HepG2 (cell line): ENCODE measurements at regions of chr17 and their contacts with region 1.

Region 1: GRCh38 chr17:17370711-17371110 is 67.5 kb downstream of the NT5M start:
- DNase-seq: no peak
- ATAC-seq: peak; percentile 25; the same call in 2 of the 3 replicates
- H3K4me3 ChIP-seq: no peak overlapping the region
- H3K27ac ChIP-seq: no peak overlapping the region
- H3K4me1 ChIP-seq: peaks cover 48% of the 10 kb centered on the region
- H3K27me3 ChIP-seq: no peaks in the 10 kb centered on the region
- CTCF ChIP-seq: no peak
- EP300 ChIP-seq: no peak
- POLR2A ChIP-seq: no peak
- RAD21 ChIP-seq: no peak

Region 2: DNA sequence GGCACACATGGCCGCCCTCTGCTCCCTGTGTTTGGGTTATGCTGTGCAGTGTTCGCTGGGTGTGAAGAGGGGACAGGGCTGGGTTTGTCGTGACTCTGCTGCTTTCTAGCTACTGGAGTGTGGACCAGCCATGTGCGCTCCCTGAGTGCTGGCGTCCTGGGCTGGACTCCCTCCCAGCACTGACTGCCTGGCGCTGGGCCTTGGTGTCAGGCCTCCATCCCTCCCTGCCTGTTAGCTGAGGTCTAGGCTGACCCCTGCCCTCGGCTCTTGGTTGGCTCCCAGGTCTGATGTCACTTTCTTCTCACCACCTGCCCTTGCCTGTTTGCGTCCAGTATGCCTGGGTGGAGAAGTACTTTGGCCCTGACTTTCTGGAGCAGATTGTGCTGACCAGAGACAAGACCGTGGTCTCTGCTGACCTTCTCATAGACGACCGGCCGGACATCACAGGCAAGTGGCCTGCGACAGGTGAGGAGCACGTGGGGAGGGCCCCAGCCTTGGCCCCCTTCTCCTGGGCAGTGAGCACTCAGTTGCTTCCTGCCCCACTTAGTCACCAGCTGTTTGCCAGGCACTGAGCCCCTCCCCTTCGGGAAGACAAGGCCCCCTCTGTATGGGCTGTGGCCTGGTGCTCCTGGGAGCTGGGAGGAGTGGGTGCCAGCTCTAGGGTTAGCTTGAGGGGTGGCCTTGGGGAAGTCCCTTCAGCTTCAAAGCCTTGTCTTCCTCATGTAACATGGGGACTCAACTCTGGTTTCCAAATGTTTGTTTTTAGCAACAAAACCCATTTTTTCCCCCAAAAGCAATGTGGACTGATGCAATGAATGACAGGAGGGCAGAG is 26.0 kb before region 1 on chr17:
- CTCF ChIA-PET with region 1: no interaction called
- POLR2A ChIA-PET with region 1: no interaction called
- in situ Hi-C with region 1: no loop called
- intact Hi-C with region 1: no loop called
- DNase-seq: peak; percentile 68
- ATAC-seq: peak; percentile 44
- H3K4me3 ChIP-seq: peak overlapping the region in 1 of 3 experiments; percentile 7; a peak in 1 of 6 replicates
- H3K27ac ChIP-seq: no peak overlapping the region
- H3K4me1 ChIP-seq: peaks cover 69% of the 10 kb centered on the region
- H3K27me3 ChIP-seq: peaks cover 2 to 22% of the 10 kb centered on the region in 2 experiments
- CTCF ChIP-seq: no peak
- EP300 ChIP-seq: no peak; a peak in 1 of 4 replicates
- POLR2A ChIP-seq: no peak
- RAD21 ChIP-seq: no peak

Region 3: GRCh38 chr17:17387830-17388441 is 17.2 kb after region 1 on chr17:
- CTCF ChIA-PET with region 1: no interaction called
- POLR2A ChIA-PET with region 1: interaction called, 14 read pairs
- in situ Hi-C with region 1: no loop called
- intact Hi-C with region 1: no loop called
- DNase-seq: peak; percentile 77
- ATAC-seq: peak; percentile 95
- H3K4me3 ChIP-seq: peak overlapping the region in 2 of 3 experiments; percentile 25 to 62; a peak in 3 of 6 replicates
- H3K27ac ChIP-seq: no peak overlapping the region
- H3K4me1 ChIP-seq: peaks cover 19% of the 10 kb centered on the region
- H3K27me3 ChIP-seq: peaks cover 0 to 14% of the 10 kb centered on the region in 2 experiments; a peak in 2 of 5 replicates
- CTCF ChIP-seq: peak; percentile 75
- EP300 ChIP-seq: no peak
- POLR2A ChIP-seq: no peak
- RAD21 ChIP-seq: peak; percentile 84

Region 4: DNA sequence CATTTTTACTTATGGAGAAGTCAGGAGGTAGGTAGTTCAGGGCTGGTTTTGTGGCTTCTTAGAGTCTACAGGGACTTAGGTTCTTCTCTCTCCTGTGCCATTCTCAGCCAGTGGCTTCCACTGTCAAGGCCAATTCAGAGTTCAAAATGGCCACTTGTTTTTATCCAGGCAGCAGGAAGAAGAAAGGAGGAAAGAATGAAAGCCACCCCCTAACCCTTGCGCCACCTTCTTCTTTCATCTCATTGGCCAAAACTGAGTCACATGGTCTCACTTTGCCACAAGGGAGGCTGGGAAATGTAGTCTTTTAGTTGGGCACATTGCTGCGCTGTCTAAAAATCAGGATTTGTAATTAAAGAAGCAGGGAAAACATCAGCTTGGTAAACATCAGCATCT is 45.3 kb after region 1 on chr17:
- CTCF ChIA-PET with region 1: no interaction called
- POLR2A ChIA-PET with region 1: interaction called, 16 read pairs
- in situ Hi-C with region 1: no loop called
- intact Hi-C with region 1: no loop called
- DNase-seq: peak; percentile 91
- ATAC-seq: peak; percentile 73
- H3K4me3 ChIP-seq: no peak overlapping the region
- H3K27ac ChIP-seq: peak overlapping the region; percentile 82
- H3K4me1 ChIP-seq: peaks cover 50% of the 10 kb centered on the region
- H3K27me3 ChIP-seq: no peaks in the 10 kb centered on the region
- CTCF ChIP-seq: no peak
- EP300 ChIP-seq: no peak
- POLR2A ChIP-seq: no peak
- RAD21 ChIP-seq: no peak